ENCODE measurements at regions of chr1 and their contacts with region 1.

Region 1: GRCh38 chr1:91732291-91733107 is 153.5 kb downstream of the TGFBR3 start:
- DNase-seq: peak; percentile 87 to 100
- H3K4me3 ChIP-seq: peak overlapping the region; percentile 32; the same call in 1 of the 2 replicates
- H3K27ac ChIP-seq: peak overlapping the region; percentile 79
- H3K4me1 ChIP-seq: peaks cover 76% of the 10 kb centered on the region
- H3K27me3 ChIP-seq: no peaks in the 10 kb centered on the region
- CTCF ChIP-seq: no peak

Region 2: GRCh38 chr1:91611498-91611917 is 121.0 kb before region 1 on chr1:
- CTCF ChIA-PET with region 1: no interaction called
- POLR2A ChIA-PET with region 1: no interaction called
- intact Hi-C with region 1: loop called (anchors 2 kb)
- DNase-seq: no peak
- H3K4me3 ChIP-seq: no peak overlapping the region
- H3K27ac ChIP-seq: no peak overlapping the region
- H3K4me1 ChIP-seq: peaks cover 37% of the 10 kb centered on the region
- H3K27me3 ChIP-seq: no peaks in the 10 kb centered on the region
- CTCF ChIP-seq: no peak

Region 3: GRCh38 chr1:91795591-91796389 is 63.3 kb after region 1 on chr1:
- CTCF ChIA-PET with region 1: interaction called, 3 read pairs
- POLR2A ChIA-PET with region 1: interaction called, 3 read pairs
- intact Hi-C with region 1: loop called (anchors 1 kb)
- DNase-seq: peak; percentile 43 to 98
- H3K4me3 ChIP-seq: peak overlapping the region; percentile 38
- H3K27ac ChIP-seq: peak overlapping the region; percentile 80
- H3K4me1 ChIP-seq: peaks cover 35% of the 10 kb centered on the region
- H3K27me3 ChIP-seq: no peaks in the 10 kb centered on the region
- CTCF ChIP-seq: no peak

Region 4: DNA sequence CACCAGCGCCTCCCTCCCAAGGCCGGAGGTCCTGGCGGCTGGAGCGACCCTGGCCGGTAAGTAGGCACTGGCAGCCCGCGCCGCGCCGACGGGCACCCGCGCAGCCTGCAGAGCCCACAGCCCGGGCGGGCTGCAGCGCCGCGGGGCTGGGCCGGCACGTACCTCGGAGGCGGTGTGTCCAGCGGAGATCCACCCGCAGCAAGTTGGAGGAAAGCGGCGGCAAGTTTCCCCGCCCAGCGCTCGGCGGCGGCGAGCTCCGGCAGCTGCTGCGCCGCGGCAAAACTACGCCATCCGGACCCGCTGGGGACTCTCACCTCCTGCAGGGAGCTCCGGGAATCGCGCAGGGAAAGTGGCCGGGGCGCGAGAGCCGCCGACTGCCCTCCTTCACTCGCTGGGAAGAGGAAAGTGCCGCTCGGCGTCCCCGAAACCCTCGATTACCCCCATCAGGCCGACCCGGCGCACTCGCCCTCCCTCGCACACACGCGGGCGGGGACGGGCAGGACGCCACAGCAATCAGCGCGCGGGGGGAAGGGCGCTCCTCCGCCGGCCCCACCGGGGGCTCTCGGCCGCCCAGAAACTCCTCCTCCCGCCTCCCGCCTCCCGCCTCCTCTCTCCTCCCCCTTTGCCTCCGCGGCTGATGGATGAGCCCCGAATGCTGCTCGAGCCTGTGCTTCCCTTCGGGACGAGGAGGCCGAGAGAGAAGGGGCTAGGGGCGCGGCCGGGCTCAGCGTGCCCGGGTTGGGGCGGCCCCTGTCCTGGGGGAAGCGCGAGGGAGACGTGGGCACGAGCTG is 153.4 kb after region 1 on chr1 and contains the start of gene TGFBR3:
- CTCF ChIA-PET with region 1: no interaction called
- POLR2A ChIA-PET with region 1: interaction called, 6 read pairs
- intact Hi-C with region 1: loop called (anchors 5 kb)
- DNase-seq: peak; percentile 77 to 80
- H3K4me3 ChIP-seq: peak within 1 kb of the TSS; percentile 87
- H3K27ac ChIP-seq: peak within 1 kb of the TSS; percentile 30; the same call in 1 of the 2 replicates
- H3K4me1 ChIP-seq: peaks cover 42% of the 10 kb centered on the region
- H3K27me3 ChIP-seq: no peaks in the 10 kb centered on the region
- CTCF ChIP-seq: peak; percentile 60
- total RNA-seq, gene TGFBR3: 1.6 and 2.5 TPM in 2 replicates

Region 5: GRCh38 chr1:92817986-92818764 is 1085.7 kb after region 1 on chr1:
- CTCF ChIA-PET with region 1: no interaction called
- POLR2A ChIA-PET with region 1: interaction called, 14 read pairs
- intact Hi-C with region 1: no loop called
- DNase-seq: peak in 1 of 2 experiments; percentile 34
- H3K4me3 ChIP-seq: no peak overlapping the region
- H3K27ac ChIP-seq: peak overlapping the region; percentile 31; the same call in 1 of the 2 replicates
- H3K4me1 ChIP-seq: peaks cover 40% of the 10 kb centered on the region
- H3K27me3 ChIP-seq: no peaks in the 10 kb centered on the region
- CTCF ChIP-seq: peak; percentile 79